CD4-positive, alpha-beta T cell (primary cell): ENCODE measurements at regions of chr13 and their contacts with region 1.

Region 1: DNA sequence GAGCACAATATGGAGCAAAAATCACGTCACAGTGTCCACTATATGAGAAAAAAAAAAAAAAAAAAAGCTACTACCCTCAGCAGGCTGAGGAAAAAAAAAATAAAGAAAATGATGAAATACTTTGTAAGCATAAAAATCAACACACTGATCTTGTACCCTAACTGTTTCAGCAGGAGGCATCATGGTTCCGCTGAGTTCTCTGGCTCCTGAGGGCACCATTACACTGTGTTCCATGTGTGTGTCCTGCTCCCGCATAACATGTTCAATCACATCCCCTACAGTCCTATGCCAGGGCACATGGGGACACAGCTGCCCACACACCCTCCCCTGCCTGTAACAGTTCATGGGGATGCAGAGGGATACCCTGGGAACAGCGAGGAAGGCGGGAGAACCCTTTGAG is 33.5 kb downstream of the DOCK9 start:
- DNase-seq: no peak
- ATAC-seq: no peak
- H3K4me3 ChIP-seq: no peak overlapping the region
- H3K4me3 Mint-ChIP-seq: no peak overlapping the region
- H3K27ac ChIP-seq: no peak overlapping the region
- H3K27ac Mint-ChIP-seq: no peak overlapping the region
- H3K4me1 ChIP-seq: peaks cover 7% of the 10 kb centered on the region
- H3K4me1 Mint-ChIP-seq: peaks cover 64% of the 10 kb centered on the region
- H3K27me3 ChIP-seq: no peaks in the 10 kb centered on the region
- H3K27me3 Mint-ChIP-seq: no peaks in the 10 kb centered on the region
- CTCF ChIP-seq: no peak

Region 2: DNA sequence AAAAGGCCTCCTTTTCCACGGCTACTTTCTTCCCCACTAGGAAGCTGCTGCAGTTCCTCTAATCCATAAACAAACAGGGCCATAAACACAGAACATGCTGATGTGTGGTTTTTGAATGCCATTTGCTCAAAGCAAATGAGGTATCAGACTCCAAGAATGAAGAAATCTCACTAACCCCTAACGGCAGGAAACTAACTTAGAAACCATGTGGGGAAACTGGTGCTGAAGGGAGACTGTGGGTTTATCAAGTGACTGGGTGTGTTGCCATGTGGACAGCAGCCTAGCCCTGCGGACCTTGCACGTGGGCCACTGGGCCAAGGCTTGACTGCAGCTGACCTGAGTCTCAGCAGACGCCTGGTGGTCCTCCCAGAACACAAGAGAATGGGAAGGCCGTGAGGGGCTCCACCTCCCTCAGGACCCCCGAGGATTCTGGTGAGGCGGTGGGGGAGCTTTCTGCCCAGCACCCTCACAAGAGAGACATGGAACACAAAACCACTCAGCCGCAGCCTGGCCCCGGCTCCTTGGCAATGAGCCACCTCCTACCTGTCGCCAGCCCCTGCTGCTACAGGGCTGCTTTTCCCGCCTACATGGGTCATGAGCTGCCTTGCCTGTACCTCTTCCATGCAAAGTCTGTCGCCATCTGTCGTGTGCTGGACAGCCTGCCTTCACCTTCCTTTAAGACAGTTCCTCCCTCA is 202.4 kb before region 1 on chr13:
- CTCF ChIA-PET with region 1: no interaction called
- POLR2A ChIA-PET with region 1: no interaction called
- intact Hi-C with region 1: no loop called
- DNase-seq: no peak
- ATAC-seq: no peak
- H3K4me3 ChIP-seq: no peak overlapping the region
- H3K4me3 Mint-ChIP-seq: no peak overlapping the region
- H3K27ac ChIP-seq: no peak overlapping the region
- H3K27ac Mint-ChIP-seq: no peak overlapping the region
- H3K4me1 ChIP-seq: no peaks in the 10 kb centered on the region
- H3K4me1 Mint-ChIP-seq: no peaks in the 10 kb centered on the region
- H3K27me3 ChIP-seq: no peaks in the 10 kb centered on the region
- H3K27me3 Mint-ChIP-seq: no peaks in the 10 kb centered on the region
- CTCF ChIP-seq: no peak

Region 3: DNA sequence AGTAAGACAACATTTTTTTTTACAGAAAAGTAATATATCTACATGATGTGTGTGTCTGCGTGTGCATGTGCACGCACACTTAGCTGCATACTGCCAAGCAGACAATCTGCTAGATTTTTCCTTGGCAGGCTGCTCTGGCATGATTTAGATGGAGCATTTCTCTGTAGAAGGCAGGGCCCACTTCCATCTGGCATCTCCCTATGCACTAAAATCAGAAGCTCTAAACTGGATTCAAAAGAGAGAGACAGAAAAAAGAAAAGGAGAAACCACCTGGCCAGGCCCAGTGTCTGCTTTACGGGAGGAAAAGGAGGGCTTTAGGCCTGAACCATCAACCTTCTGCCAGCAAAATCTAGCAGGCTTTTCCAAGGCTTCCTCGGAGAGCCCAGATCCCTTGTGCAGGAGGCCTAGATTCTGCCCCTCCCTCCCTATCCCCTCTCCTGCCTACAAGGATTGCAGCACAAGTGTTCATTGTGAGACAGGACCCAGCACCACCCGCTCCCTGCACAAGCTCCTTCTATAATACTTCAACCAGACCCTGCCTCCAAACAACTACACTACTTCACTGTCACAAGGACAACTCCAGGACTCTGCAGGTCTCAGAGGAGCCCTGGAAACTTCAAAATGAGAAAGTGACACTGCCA is 65.7 kb before region 1 on chr13:
- CTCF ChIA-PET with region 1: no interaction called
- POLR2A ChIA-PET with region 1: no interaction called
- intact Hi-C with region 1: no loop called
- DNase-seq: no peak
- ATAC-seq: no peak
- H3K4me3 ChIP-seq: no peak overlapping the region
- H3K4me3 Mint-ChIP-seq: no peak overlapping the region
- H3K27ac ChIP-seq: no peak overlapping the region
- H3K27ac Mint-ChIP-seq: peak overlapping the region; percentile 60
- H3K4me1 ChIP-seq: no peaks in the 10 kb centered on the region
- H3K4me1 Mint-ChIP-seq: peaks cover 15% of the 10 kb centered on the region
- H3K27me3 ChIP-seq: no peaks in the 10 kb centered on the region
- H3K27me3 Mint-ChIP-seq: no peaks in the 10 kb centered on the region
- CTCF ChIP-seq: no peak

Region 4: DNA sequence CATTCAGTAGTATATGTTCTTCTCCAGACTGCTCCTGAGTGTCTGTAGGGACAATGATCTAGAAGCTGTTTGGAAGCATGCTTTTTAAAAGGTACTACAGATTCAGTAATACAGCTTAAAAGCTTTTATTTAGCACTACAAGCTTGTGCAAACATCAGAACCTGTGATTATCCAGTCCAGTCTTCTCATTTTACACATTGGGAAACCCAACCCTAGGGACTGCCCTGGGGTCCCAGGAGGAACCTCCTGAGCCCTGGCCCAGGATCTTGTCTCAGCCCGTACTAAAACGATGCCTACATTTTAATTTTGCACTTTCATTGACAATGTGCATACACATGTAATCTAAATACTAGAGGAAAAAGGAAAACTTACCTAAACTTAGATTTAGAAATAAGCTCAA is 21.0 kb after region 1 on chr13:
- CTCF ChIA-PET with region 1: no interaction called
- POLR2A ChIA-PET with region 1: no interaction called
- intact Hi-C with region 1: loop called in 1 of 2 experiments (anchors 2 kb)
- DNase-seq: no peak
- ATAC-seq: no peak
- H3K4me3 ChIP-seq: no peak overlapping the region
- H3K4me3 Mint-ChIP-seq: no peak overlapping the region
- H3K27ac ChIP-seq: no peak overlapping the region
- H3K27ac Mint-ChIP-seq: no peak overlapping the region
- H3K4me1 ChIP-seq: peaks cover 10% of the 10 kb centered on the region
- H3K4me1 Mint-ChIP-seq: peaks cover 37% of the 10 kb centered on the region
- H3K27me3 ChIP-seq: no peaks in the 10 kb centered on the region
- H3K27me3 Mint-ChIP-seq: no peaks in the 10 kb centered on the region
- CTCF ChIP-seq: no peak